AG04449 (cell line): ENCODE measurements at regions of chr11 and their contacts with region 1.

Region 1: GRCh38 chr11:16605894-16606783 is 132.3 kb upstream of the C11orf58 start:
- DNase-seq: peak; percentile 73
- H3K4me3 ChIP-seq: peak overlapping the region; percentile 79
- CTCF ChIP-seq: peak; percentile 96

Region 2: GRCh38 chr11:16184588-16184987 is 421.6 kb before region 1 on chr11:
- CTCF ChIA-PET with region 1: interaction called, 11 read pairs
- POLR2A ChIA-PET with region 1: no interaction called
- DNase-seq: peak; percentile 63
- H3K4me3 ChIP-seq: no peak overlapping the region
- CTCF ChIP-seq: no peak

Region 3: GRCh38 chr11:16382638-16383380 is 223.3 kb before region 1 on chr11:
- CTCF ChIA-PET with region 1: interaction called, 9 read pairs
- POLR2A ChIA-PET with region 1: interaction called, 14 read pairs
- DNase-seq: peak; percentile 76
- H3K4me3 ChIP-seq: no peak overlapping the region
- CTCF ChIP-seq: no peak

Region 4: DNA sequence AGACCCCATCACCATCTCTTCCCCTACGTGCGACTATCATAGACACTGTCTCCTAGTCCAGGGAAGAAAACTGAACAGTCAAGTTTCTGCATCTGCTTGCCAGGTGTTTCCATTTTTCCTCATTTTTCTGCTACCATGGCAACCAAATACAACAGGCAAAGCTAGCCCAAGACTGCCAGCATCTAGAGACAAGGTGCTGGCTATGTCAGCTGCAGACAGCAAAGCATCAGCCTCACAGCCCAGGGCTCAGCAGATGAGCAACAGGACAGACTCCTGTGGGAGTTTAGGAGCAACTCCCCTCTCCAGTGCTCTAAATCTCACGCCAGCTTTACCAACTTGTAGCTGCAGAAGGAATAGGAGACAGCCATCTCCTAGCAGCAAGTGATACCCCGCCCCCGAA is 256.6 kb after region 1 on chr11:
- CTCF ChIA-PET with region 1: no interaction called
- POLR2A ChIA-PET with region 1: no interaction called
- DNase-seq: no peak
- H3K4me3 ChIP-seq: no peak overlapping the region
- CTCF ChIP-seq: no peak